PC-9 (cell line): ENCODE measurements at regions of chr11 and their contacts with region 1.

Region 1: GRCh38 chr11:30561691-30562415 is 24.3 kb downstream of the MPPED2 start:
- DNase-seq: no peak
- H3K4me3 ChIP-seq: no peak overlapping the region
- H3K27ac ChIP-seq: no peak overlapping the region
- H3K4me1 ChIP-seq: no peaks in the 10 kb centered on the region
- H3K27me3 ChIP-seq: no peaks in the 10 kb centered on the region
- CTCF ChIP-seq: no peak

Region 2: GRCh38 chr11:29352273-29352795 is 1209.5 kb before region 1 on chr11:
- CTCF ChIA-PET with region 1: no interaction called
- POLR2A ChIA-PET with region 1: interaction called, 13 read pairs
- intact Hi-C with region 1: no loop called
- DNase-seq: no peak
- H3K4me3 ChIP-seq: no peak overlapping the region
- H3K27ac ChIP-seq: no peak overlapping the region
- H3K4me1 ChIP-seq: no peaks in the 10 kb centered on the region
- H3K27me3 ChIP-seq: 0 out of 2 replicates have a peak, but pooled peaks cover 4% of the 10 kb centered on the region
- CTCF ChIP-seq: no peak

Region 3: GRCh38 chr11:30635401-30635989 is 73.6 kb after region 1 on chr11:
- CTCF ChIA-PET with region 1: no interaction called
- POLR2A ChIA-PET with region 1: no interaction called
- intact Hi-C with region 1: no loop called
- DNase-seq: no peak
- H3K4me3 ChIP-seq: no peak overlapping the region
- H3K27ac ChIP-seq: no peak overlapping the region
- H3K4me1 ChIP-seq: no peaks in the 10 kb centered on the region
- H3K27me3 ChIP-seq: peaks cover 10% of the 10 kb centered on the region; the same call in 1 of the 2 replicates
- CTCF ChIP-seq: no peak